ENCODE measurements at regions of chr20 and their contacts with region 1.

Region 1: GRCh38 chr20:51454250-51454865 is 88.2 kb downstream of the NFATC2 start:
- DNase-seq: no peak
- H3K4me3 ChIP-seq: no peak overlapping the region
- H3K27ac ChIP-seq: no peak overlapping the region
- H3K4me1 ChIP-seq: peaks cover 0 to 4% of the 10 kb centered on the region in 2 donors
- H3K27me3 ChIP-seq: no peaks in the 10 kb centered on the region
- CTCF ChIP-seq: no peak
- POLR2A ChIP-seq: no peak

Region 2: GRCh38 chr20:51172974-51173397 is 281.4 kb before region 1 on chr20:
- intact Hi-C with region 1: no loop called
- DNase-seq: no peak
- H3K4me3 ChIP-seq: no peak overlapping the region
- H3K27ac ChIP-seq: no peak overlapping the region
- H3K4me1 ChIP-seq: no peaks in the 10 kb centered on the region
- H3K27me3 ChIP-seq: no peaks in the 10 kb centered on the region
- CTCF ChIP-seq: no peak
- POLR2A ChIP-seq: no peak

Region 3: GRCh38 chr20:51517839-51518238 is 63.5 kb after region 1 on chr20:
- intact Hi-C with region 1: loop called (anchors 2 kb)
- DNase-seq: no peak
- H3K4me3 ChIP-seq: no peak overlapping the region
- H3K27ac ChIP-seq: no peak overlapping the region
- H3K4me1 ChIP-seq: no peaks in the 10 kb centered on the region
- H3K27me3 ChIP-seq: no peaks in the 10 kb centered on the region
- CTCF ChIP-seq: no peak
- POLR2A ChIP-seq: no peak

Measured in breast epithelium (tissue), 4 donors.